ENCODE measurements at regions of chr1 and their contacts with region 1.

Region 1: GRCh38 chr1:93846211-93846991 is 32.6 kb downstream of the DNTTIP2 start:
- DNase-seq: peak; percentile 75
- H3K4me3 Mint-ChIP-seq: peak overlapping the region; percentile 87
- H3K27ac Mint-ChIP-seq: peak overlapping the region; percentile 92
- H3K4me1 Mint-ChIP-seq: peaks cover 21% of the 10 kb centered on the region
- H3K27me3 Mint-ChIP-seq: no peaks in the 10 kb centered on the region

Region 2: GRCh38 chr1:92960395-92961130 is 885.8 kb before region 1 on chr1:
- CTCF ChIA-PET with region 1: no interaction called
- intact Hi-C with region 1: loop called (anchors 5 kb)
- DNase-seq: peak; percentile 76
- H3K4me3 Mint-ChIP-seq: peak overlapping the region; percentile 89
- H3K27ac Mint-ChIP-seq: peak overlapping the region; percentile 94
- H3K4me1 Mint-ChIP-seq: peaks cover 41% of the 10 kb centered on the region
- H3K27me3 Mint-ChIP-seq: no peaks in the 10 kb centered on the region

Region 3: GRCh38 chr1:93179886-93180722 is 666.3 kb before region 1 on chr1 and contains the start of gene TMED5:
- CTCF ChIA-PET with region 1: no interaction called
- intact Hi-C with region 1: loop called (anchors 1 kb)
- DNase-seq: peak; percentile 98
- H3K4me3 Mint-ChIP-seq: peak within 1 kb of the TSS; percentile 88
- H3K27ac Mint-ChIP-seq: peak within 1 kb of the TSS; percentile 99
- H3K4me1 Mint-ChIP-seq: peaks cover 49% of the 10 kb centered on the region
- H3K27me3 Mint-ChIP-seq: no peaks in the 10 kb centered on the region
- total RNA-seq, gene TMED5: 27.8 to 28.2 TPM

Region 4: GRCh38 chr1:93607814-93608186 is 238.6 kb before region 1 on chr1:
- CTCF ChIA-PET with region 1: interaction called, 13 read pairs
- intact Hi-C with region 1: loop called (anchors 1 kb)
- DNase-seq: peak; percentile 78
- H3K4me3 Mint-ChIP-seq: no peak overlapping the region
- H3K27ac Mint-ChIP-seq: no peak overlapping the region
- H3K4me1 Mint-ChIP-seq: peaks cover 25% of the 10 kb centered on the region
- H3K27me3 Mint-ChIP-seq: peaks cover 21% of the 10 kb centered on the region

Region 5: GRCh38 chr1:93758842-93759515 is 87.4 kb before region 1 on chr1:
- CTCF ChIA-PET with region 1: no interaction called
- intact Hi-C with region 1: loop called (anchors 5 kb)
- DNase-seq: peak; percentile 66
- H3K4me3 Mint-ChIP-seq: no peak overlapping the region
- H3K27ac Mint-ChIP-seq: peak overlapping the region; percentile 64
- H3K4me1 Mint-ChIP-seq: peaks cover 7% of the 10 kb centered on the region
- H3K27me3 Mint-ChIP-seq: no peaks in the 10 kb centered on the region

Region 6: GRCh38 chr1:93909146-93910050 is 63.0 kb after region 1 on chr1 and contains the start of gene GCLM:
- CTCF ChIA-PET with region 1: no interaction called
- intact Hi-C with region 1: loop called (anchors 1 kb)
- DNase-seq: peak; percentile 88
- H3K4me3 Mint-ChIP-seq: peak within 1 kb of the TSS; percentile 82
- H3K27ac Mint-ChIP-seq: peak within 1 kb of the TSS; percentile 87
- H3K4me1 Mint-ChIP-seq: peaks cover 27% of the 10 kb centered on the region
- H3K27me3 Mint-ChIP-seq: no peaks in the 10 kb centered on the region
- total RNA-seq, gene GCLM: 19.5 to 22.7 TPM

Region 7: GRCh38 chr1:94417978-94418663 is 571.7 kb after region 1 on chr1 and contains the start of gene ABCD3:
- CTCF ChIA-PET with region 1: no interaction called
- intact Hi-C with region 1: loop called (anchors 1 kb)
- DNase-seq: peak; percentile 94
- H3K4me3 Mint-ChIP-seq: no peak within 1 kb of the TSS
- H3K27ac Mint-ChIP-seq: peak within 1 kb of the TSS; percentile 43
- H3K4me1 Mint-ChIP-seq: peaks cover 35% of the 10 kb centered on the region
- H3K27me3 Mint-ChIP-seq: no peaks in the 10 kb centered on the region
- total RNA-seq, gene ABCD3: 29.2 to 30.8 TPM

Measured in activated naive CD4-positive, alpha-beta T cell treated with anti-CD3 and anti-CD28 coated beads for 36 hours (primary cell).